ENCODE measurements at regions of chr13 and their contacts with region 1.

Region 1: GRCh38 chr13:99955747-99956472 is 15.7 kb downstream of the ZIC5 start:
- DNase-seq: no peak
- H3K4me3 Mint-ChIP-seq: peak overlapping the region; percentile 26
- H3K27ac Mint-ChIP-seq: no peak overlapping the region
- H3K4me1 Mint-ChIP-seq: peaks cover 23% of the 10 kb centered on the region
- H3K27me3 Mint-ChIP-seq: peaks cover 70% of the 10 kb centered on the region

Region 2: DNA sequence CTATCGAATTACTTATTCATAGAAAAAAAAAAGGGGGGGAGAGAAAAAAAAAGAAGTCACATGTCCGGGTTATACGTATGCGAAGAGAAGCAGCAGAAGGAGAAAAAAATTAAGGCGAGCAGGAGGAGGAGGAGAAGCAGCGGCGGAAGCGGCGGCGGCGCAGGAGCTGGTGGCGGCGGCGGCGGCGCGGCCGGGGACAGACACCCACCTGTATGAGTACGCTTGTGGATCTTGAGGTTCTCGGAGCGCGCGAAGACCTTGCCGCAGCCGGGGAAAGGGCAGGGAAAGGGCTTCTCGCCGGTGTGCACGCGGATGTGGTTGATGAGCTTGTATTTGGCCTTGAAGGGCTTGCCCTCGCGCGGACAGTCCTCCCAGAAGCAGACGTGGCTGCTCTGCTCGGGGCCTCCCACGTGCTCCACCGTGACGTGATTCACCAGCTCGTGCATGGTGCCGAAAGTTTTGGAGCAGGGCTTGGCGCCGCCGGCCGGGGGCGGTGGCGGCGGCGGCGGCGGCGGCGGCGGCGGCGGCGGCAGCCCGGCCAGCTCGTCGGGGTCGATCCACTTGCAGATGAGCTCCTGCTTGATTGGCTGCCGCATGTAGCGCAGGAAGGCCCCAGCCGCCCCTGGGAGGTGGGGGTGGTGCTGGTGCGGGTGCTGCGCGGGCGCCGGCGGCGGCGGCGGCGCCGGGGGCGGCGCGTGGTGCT is 14.2 kb after region 1 on chr13:
- CTCF ChIA-PET with region 1: no interaction called
- intact Hi-C with region 1: loop called (anchors 1 kb)
- DNase-seq: peak; percentile 53
- H3K4me3 Mint-ChIP-seq: peak overlapping the region; percentile 71
- H3K27ac Mint-ChIP-seq: peak overlapping the region; percentile 30
- H3K4me1 Mint-ChIP-seq: peaks cover 23% of the 10 kb centered on the region
- H3K27me3 Mint-ChIP-seq: peaks cover 75% of the 10 kb centered on the region

Region 3: GRCh38 chr13:99980201-99980823 is 24.4 kb after region 1 on chr13:
- CTCF ChIA-PET with region 1: no interaction called
- intact Hi-C with region 1: loop called (anchors 2 kb)
- DNase-seq: peak; percentile 62
- H3K4me3 Mint-ChIP-seq: peak overlapping the region; percentile 15
- H3K27ac Mint-ChIP-seq: no peak overlapping the region
- H3K4me1 Mint-ChIP-seq: peaks cover 23% of the 10 kb centered on the region
- H3K27me3 Mint-ChIP-seq: peaks cover 69% of the 10 kb centered on the region